PC-9 (cell line): ENCODE measurements at regions of chr5 and their contacts with region 1.

Region 1: GRCh38 chr5:45484781-45485180 is 211.4 kb downstream of the HCN1 start:
- DNase-seq: no peak
- H3K4me3 ChIP-seq: no peak overlapping the region
- H3K27ac ChIP-seq: no peak overlapping the region
- H3K4me1 ChIP-seq: no peaks in the 10 kb centered on the region
- H3K27me3 ChIP-seq: no peaks in the 10 kb centered on the region
- CTCF ChIP-seq: no peak

Region 2: GRCh38 chr5:44632344-44632743 is 852.4 kb before region 1 on chr5:
- CTCF ChIA-PET with region 1: no interaction called
- POLR2A ChIA-PET with region 1: no interaction called
- intact Hi-C with region 1: no loop called
- DNase-seq: no peak
- H3K4me3 ChIP-seq: no peak overlapping the region
- H3K27ac ChIP-seq: no peak overlapping the region
- H3K4me1 ChIP-seq: no peaks in the 10 kb centered on the region
- H3K27me3 ChIP-seq: no peaks in the 10 kb centered on the region
- CTCF ChIP-seq: no peak

Region 3: DNA sequence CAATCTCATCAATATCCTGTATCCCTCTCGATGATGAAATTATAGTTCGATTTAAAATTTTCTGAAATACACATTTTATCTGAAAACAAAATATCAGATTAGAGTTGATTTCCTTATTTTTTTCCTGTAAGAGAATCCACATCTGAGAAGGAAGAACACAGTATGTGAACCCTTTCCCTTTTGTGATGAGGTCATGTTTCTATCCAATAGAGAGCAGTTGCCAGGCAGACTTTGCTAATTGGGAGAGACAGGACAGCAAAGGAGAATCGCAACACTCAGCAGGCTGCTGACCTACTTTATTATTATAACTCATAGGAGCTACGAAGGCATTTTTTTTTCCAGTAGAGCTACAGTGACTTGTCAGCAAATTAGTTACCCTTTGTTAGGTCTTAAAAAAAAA is 30.7 kb before region 1 on chr5:
- CTCF ChIA-PET with region 1: no interaction called
- POLR2A ChIA-PET with region 1: interaction called, 19 read pairs
- intact Hi-C with region 1: no loop called
- DNase-seq: peak in 1 of 2 experiments; percentile 10
- H3K4me3 ChIP-seq: no peak overlapping the region
- H3K27ac ChIP-seq: no peak overlapping the region
- H3K4me1 ChIP-seq: no peaks in the 10 kb centered on the region
- H3K27me3 ChIP-seq: no peaks in the 10 kb centered on the region
- CTCF ChIP-seq: no peak

Region 4: GRCh38 chr5:45725537-45725936 is 240.8 kb after region 1 on chr5:
- CTCF ChIA-PET with region 1: no interaction called
- POLR2A ChIA-PET with region 1: no interaction called
- intact Hi-C with region 1: no loop called
- DNase-seq: no peak
- H3K4me3 ChIP-seq: no peak overlapping the region
- H3K27ac ChIP-seq: no peak overlapping the region
- H3K4me1 ChIP-seq: no peaks in the 10 kb centered on the region
- H3K27me3 ChIP-seq: no peaks in the 10 kb centered on the region
- CTCF ChIP-seq: no peak

Region 5: DNA sequence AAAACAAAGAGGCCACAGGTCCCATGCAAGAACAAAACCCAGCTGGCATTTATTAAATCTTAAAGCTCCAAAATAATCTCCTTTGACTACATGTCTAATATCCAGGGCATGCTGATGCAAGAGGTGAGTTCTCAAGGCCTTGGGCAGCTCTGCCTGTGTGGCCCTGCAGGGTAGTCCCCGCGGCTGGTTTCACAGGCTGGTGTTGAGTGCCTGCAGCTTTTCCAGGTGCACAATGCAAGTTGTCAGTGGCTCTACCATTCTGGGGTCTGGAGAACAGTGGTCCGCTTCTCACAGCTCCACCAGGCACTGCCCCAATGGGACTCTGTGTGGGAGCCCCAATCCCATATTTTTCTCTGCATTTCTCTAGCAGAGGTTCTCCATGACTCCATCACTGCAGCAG is 265.8 kb after region 1 on chr5:
- CTCF ChIA-PET with region 1: no interaction called
- POLR2A ChIA-PET with region 1: no interaction called
- intact Hi-C with region 1: no loop called
- DNase-seq: no peak
- H3K4me3 ChIP-seq: no peak overlapping the region
- H3K27ac ChIP-seq: no peak overlapping the region
- H3K4me1 ChIP-seq: no peaks in the 10 kb centered on the region
- H3K27me3 ChIP-seq: no peaks in the 10 kb centered on the region
- CTCF ChIP-seq: no peak